HepG2 (cell line): ENCODE measurements at regions of chr1 and their contacts with region 1.

Region 1: DNA sequence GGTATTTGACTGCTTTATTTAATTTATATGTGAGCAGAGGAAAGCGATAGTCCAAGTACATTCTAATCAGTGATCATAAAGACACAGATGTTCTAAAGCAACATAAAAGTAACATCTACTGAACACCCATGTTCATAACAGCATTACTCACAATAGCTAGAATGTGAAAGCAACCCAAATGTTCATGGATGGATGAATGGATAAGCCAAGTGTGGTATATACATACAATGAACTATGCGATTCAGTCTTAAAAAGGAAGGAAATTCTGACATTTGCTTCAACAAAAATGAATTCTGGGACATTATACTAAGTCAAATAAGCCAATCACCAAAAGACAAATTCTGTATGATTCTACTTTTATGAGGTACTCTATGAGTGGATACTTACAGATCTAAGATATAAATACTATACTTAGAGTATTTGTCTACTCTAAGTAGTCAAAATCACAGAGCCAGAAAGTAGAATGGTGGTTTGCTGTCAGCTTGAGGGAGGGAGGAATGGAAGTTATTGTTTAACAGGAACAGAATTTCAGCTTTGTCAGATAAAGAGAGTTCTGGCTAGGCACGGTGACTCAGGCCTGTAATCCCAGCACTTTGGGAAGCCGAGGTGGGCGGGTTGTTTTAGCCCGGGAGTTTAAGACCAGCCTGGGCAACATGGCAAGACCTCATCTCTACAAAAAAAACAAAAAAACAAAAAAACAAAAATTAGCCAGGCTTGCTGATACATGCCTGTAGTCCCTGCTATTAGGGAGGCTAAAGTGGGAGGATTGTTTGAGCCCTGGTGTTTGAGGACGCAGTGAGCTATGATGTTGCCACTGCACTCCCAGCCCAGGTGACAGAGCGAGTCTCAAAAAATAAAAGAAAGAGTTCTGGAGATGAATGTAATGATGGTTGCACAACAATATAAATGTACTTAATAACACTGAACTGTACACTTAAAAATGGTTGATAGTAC is 79.7 kb upstream of the ARHGAP29 start:
- DNase-seq: peak; percentile 83
- ATAC-seq: peak; percentile 88
- H3K4me3 ChIP-seq: peak overlapping the region in 2 of 3 experiments; percentile 27; a peak in 3 of 6 replicates
- H3K27ac ChIP-seq: peak overlapping the region; percentile 60
- H3K4me1 ChIP-seq: peaks cover 82% of the 10 kb centered on the region
- H3K27me3 ChIP-seq: no peaks in the 10 kb centered on the region
- CTCF ChIP-seq: no peak
- EP300 ChIP-seq: no peak
- POLR2A ChIP-seq: no peak
- RAD21 ChIP-seq: no peak

Region 2: GRCh38 chr1:94329986-94330385 is 12.9 kb after region 1 on chr1:
- CTCF ChIA-PET with region 1: no interaction called
- POLR2A ChIA-PET with region 1: interaction called, 11 read pairs
- in situ Hi-C with region 1: no loop called
- intact Hi-C with region 1: no loop called
- DNase-seq: peak; percentile 67
- ATAC-seq: peak; percentile 90
- H3K4me3 ChIP-seq: peak overlapping the region in 2 of 3 experiments; percentile 22 to 26; a peak in 2 of 6 replicates
- H3K27ac ChIP-seq: no peak overlapping the region
- H3K4me1 ChIP-seq: peaks cover 59% of the 10 kb centered on the region
- H3K27me3 ChIP-seq: no peaks in the 10 kb centered on the region
- CTCF ChIP-seq: peak; percentile 82
- EP300 ChIP-seq: no peak
- POLR2A ChIP-seq: no peak
- RAD21 ChIP-seq: peak; percentile 61; the same call in 1 of the 2 replicates